ENCODE measurements at regions of chr14 and their contacts with region 1.

Region 1: DNA sequence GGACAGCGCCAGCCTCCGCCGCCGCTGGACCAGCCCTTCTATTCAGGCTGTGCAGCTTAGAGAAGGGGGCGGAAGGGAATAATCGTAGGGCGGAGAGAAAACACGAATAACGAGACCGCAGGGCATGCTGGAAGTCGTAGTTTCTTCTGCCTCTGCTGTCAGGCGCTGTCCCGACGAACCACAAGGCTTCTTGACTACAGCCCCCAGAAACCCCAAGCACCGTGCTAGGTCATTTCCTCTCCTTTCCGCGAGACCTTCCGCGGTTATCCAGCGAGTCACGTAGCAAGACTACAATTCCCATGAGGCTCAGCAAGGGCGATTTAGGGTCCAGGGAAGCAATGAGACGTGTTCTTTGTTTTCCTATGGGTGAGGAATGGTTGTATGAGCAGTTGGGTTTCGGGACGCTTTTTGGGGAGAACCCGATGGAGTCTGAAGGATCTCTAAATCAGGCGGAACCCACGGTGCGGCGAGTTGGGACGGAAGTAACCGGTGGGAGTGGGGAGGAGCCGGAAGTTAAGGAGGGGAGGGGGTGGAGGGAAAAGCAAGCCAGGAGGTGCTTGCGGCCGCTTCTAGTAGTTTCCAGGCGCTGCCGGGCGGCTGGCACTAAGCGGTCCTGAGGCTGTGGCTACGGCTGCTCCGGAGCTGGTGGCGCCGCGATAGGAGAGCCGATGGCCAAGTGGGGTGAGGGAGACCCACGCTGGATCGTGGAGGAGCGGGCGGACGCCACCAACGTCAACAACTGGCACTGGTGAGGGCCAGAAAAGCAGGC is at the starts of genes AHSA1 and VIPAS39:
- DNase-seq: peak; percentile 90 to 99 (median 98)
- ATAC-seq: peak; percentile 98
- H3K4me3 ChIP-seq: peak within 1 kb of the TSS; percentile 85 to 89
- H3K27ac ChIP-seq: peak within 1 kb of the TSS; percentile 88 to 99
- H3K4me1 ChIP-seq: peaks cover 12 to 32% of the 10 kb centered on the region in 2 donors
- H3K27me3 ChIP-seq: no peaks in the 10 kb centered on the region
- CTCF ChIP-seq: peak in 1 of 2 donors; percentile 8
- polyA plus RNA-seq, gene AHSA1: 143 to 203 (median 182) TPM
- polyA plus RNA-seq, gene VIPAS39: 28.3 to 40.4 (median 31.6) TPM

Region 2: GRCh38 chr14:77498120-77498979 is 40.6 kb after region 1 on chr14 and contains the start of gene ISM2:
- intact Hi-C with region 1: no loop called
- DNase-seq: peak in 3 of 4 donors; percentile 11 to 81 (median 31)
- ATAC-seq: peak; percentile 89
- H3K4me3 ChIP-seq: peak within 1 kb of the TSS; percentile 25 to 42
- H3K27ac ChIP-seq: no peak within 1 kb of the TSS
- H3K4me1 ChIP-seq: peaks cover 8 to 17% of the 10 kb centered on the region in 2 donors
- H3K27me3 ChIP-seq: peaks cover 18 to 51% of the 10 kb centered on the region in 2 donors
- CTCF ChIP-seq: no peak
- polyA plus RNA-seq, gene ISM2: 0.17 TPM in 1 of 6 donors, not detected in the others

Region 3: DNA sequence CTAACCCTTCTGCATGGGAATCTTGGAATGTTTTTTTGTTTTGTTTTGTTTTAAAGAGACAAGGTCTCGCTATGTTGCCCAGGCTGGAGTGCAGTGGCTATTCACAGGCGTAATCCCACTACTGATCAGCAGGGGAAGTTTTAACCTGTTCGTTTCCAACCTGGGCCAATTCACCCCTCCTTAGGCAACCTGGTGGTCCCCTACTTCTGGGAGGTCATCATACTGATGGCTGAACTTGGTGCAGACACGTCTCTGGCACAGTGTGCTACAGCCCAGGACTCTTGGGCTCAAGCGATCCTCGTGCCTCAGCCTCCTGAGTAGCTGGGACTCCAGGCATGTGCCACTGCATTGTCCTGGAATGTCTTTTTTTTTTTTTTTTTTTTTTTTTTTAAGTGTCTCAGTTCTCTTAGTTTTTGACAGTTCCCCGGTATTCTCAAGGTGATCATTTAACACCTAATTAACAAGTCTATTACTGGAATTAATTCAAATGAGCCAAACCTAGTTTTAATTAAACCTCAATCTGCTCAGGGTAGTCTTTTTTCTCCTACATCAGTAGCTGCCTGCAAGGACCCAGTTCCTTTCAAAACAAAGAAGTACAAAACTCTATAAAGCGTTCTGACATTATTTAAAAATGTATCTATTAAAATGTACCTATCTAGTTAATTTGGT is 89.9 kb after region 1 on chr14:
- intact Hi-C with region 1: loop called in 1 of 2 experiments (anchors 5 kb)
- DNase-seq: no peak
- ATAC-seq: no peak
- H3K4me3 ChIP-seq: no peak overlapping the region
- H3K27ac ChIP-seq: no peak overlapping the region
- H3K4me1 ChIP-seq: peaks cover 0 to 16% of the 10 kb centered on the region in 2 donors
- H3K27me3 ChIP-seq: no peaks in the 10 kb centered on the region
- CTCF ChIP-seq: no peak